ENCODE measurements at regions of chr7 and their contacts with region 1.

Region 1: GRCh38 chr7:1086588-1087464 is 1.1 kb upstream of the GPER1 start:
- DNase-seq: peak; percentile 62 to 83 (median 80)
- H3K4me3 ChIP-seq: peak overlapping the region in 3 of 4 donors; percentile 9 to 60 (median 23)
- H3K27ac ChIP-seq: peak overlapping the region in 4 of 5 donors; percentile 24 to 82 (median 74)
- H3K4me1 ChIP-seq: peaks cover 28 to 34% of the 10 kb centered on the region in 2 donors
- H3K27me3 ChIP-seq: no peaks in the 10 kb centered on the region
- CTCF ChIP-seq: peak; percentile 70 to 96 (median 90)
- POLR2A ChIP-seq: peak in 1 of 2 donors; percentile 27

Region 2: GRCh38 chr7:1123715-1124114 is 36.9 kb after region 1 on chr7:
- intact Hi-C with region 1: loop called in 1 of 2 experiments (anchors 5 kb)
- DNase-seq: peak; percentile 62 to 90 (median 79)
- H3K4me3 ChIP-seq: peak overlapping the region in 1 of 4 donors; percentile 22
- H3K27ac ChIP-seq: peak overlapping the region in 4 of 5 donors; percentile 0 to 86 (median 46)
- H3K4me1 ChIP-seq: peaks cover 0 to 14% of the 10 kb centered on the region in 2 donors
- H3K27me3 ChIP-seq: no peaks in the 10 kb centered on the region
- CTCF ChIP-seq: peak; percentile 18 to 61 (median 50)
- POLR2A ChIP-seq: peak in 1 of 2 donors; percentile 44

Region 3: GRCh38 chr7:1144269-1144771 is 57.5 kb after region 1 on chr7:
- intact Hi-C with region 1: loop called in 1 of 2 experiments (anchors 5 kb)
- DNase-seq: peak; percentile 61 to 88 (median 82)
- H3K4me3 ChIP-seq: no peak overlapping the region
- H3K27ac ChIP-seq: no peak overlapping the region
- H3K4me1 ChIP-seq: peaks cover 0 to 9% of the 10 kb centered on the region in 2 donors
- H3K27me3 ChIP-seq: no peaks in the 10 kb centered on the region
- CTCF ChIP-seq: peak in 5 of 6 experiments; percentile 48 to 74 (median 65)
- POLR2A ChIP-seq: no peak

Region 4: GRCh38 chr7:1234881-1235500 is 148.2 kb after region 1 on chr7:
- intact Hi-C with region 1: no loop called
- DNase-seq: no peak
- H3K4me3 ChIP-seq: no peak overlapping the region
- H3K27ac ChIP-seq: no peak overlapping the region
- H3K4me1 ChIP-seq: no peaks in the 10 kb centered on the region
- H3K27me3 ChIP-seq: peaks cover 86% of the 10 kb centered on the region
- CTCF ChIP-seq: no peak
- POLR2A ChIP-seq: no peak

Measured in adrenal gland (tissue), 19 donors.